ENCODE measurements at regions of chr14 and their contacts with region 1.

Region 1: DNA sequence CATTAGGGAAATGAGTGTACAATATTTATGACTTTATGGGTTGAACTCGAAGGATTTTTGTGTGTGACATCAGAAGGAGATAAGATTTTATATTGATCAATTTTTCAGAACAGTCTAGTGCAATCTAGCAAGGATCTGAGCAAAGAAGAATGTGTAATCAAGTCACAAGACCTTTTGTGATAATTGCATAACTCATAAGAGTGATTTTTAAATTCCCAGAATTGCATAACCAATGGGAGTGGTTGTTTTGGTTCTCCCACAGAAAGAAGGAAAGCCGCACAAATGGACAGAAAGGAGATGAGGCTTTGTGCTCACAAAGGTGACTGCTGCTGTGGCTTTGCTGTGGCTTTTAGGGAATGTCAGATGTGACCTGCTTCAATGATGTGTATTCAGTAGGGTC is 441.7 kb upstream of the FLRT2 start:
- DNase-seq: no peak
- H3K4me3 Mint-ChIP-seq: no peak overlapping the region
- H3K27ac Mint-ChIP-seq: no peak overlapping the region
- H3K4me1 Mint-ChIP-seq: no peaks in the 10 kb centered on the region
- H3K27me3 Mint-ChIP-seq: no peaks in the 10 kb centered on the region

Region 2: DNA sequence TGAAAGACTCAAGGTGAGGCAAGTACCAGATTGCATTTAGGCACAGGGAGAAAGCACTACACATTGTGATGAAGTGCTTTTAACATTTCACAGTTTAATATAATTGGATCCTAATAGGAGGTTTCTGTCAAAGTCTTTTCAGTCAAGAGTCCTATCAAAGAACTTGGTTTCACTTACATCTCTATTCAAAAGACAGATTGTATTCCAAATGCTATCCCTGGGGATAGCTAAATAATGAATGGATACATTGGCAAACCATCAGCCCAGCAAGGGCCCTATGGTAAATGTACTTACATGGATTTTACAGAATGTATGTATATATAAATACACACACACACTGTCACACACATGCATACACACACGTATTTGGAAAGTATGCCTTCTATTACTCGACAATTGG is 213.8 kb before region 1 on chr14:
- intact Hi-C with region 1: no loop called
- DNase-seq: no peak
- H3K4me3 Mint-ChIP-seq: no peak overlapping the region
- H3K27ac Mint-ChIP-seq: no peak overlapping the region
- H3K4me1 Mint-ChIP-seq: no peaks in the 10 kb centered on the region
- H3K27me3 Mint-ChIP-seq: no peaks in the 10 kb centered on the region

Region 3: GRCh38 chr14:85075694-85076476 is 12.3 kb before region 1 on chr14:
- intact Hi-C with region 1: loop called (anchors 1 kb)
- DNase-seq: no peak
- H3K4me3 Mint-ChIP-seq: no peak overlapping the region
- H3K27ac Mint-ChIP-seq: no peak overlapping the region
- H3K4me1 Mint-ChIP-seq: no peaks in the 10 kb centered on the region
- H3K27me3 Mint-ChIP-seq: no peaks in the 10 kb centered on the region

Measured in activated T-helper 1 cell treated with anti-CD3 and anti-CD28 coated beads, Interleukin-12 subunit alpha, Interleukin-12 subunit beta, Interleukin-2, Interleukin-4 antibody, amounts not matched to agents 30 ng/mL and 10 ng/mL and 1 ng/mL, durations not matched to agents 14 hours and 24 hours and 36 hours (primary cell).